CD4-positive, alpha-beta memory T cell (primary cell): ENCODE measurements at regions of chr3 and their contacts with region 1.

Region 1: DNA sequence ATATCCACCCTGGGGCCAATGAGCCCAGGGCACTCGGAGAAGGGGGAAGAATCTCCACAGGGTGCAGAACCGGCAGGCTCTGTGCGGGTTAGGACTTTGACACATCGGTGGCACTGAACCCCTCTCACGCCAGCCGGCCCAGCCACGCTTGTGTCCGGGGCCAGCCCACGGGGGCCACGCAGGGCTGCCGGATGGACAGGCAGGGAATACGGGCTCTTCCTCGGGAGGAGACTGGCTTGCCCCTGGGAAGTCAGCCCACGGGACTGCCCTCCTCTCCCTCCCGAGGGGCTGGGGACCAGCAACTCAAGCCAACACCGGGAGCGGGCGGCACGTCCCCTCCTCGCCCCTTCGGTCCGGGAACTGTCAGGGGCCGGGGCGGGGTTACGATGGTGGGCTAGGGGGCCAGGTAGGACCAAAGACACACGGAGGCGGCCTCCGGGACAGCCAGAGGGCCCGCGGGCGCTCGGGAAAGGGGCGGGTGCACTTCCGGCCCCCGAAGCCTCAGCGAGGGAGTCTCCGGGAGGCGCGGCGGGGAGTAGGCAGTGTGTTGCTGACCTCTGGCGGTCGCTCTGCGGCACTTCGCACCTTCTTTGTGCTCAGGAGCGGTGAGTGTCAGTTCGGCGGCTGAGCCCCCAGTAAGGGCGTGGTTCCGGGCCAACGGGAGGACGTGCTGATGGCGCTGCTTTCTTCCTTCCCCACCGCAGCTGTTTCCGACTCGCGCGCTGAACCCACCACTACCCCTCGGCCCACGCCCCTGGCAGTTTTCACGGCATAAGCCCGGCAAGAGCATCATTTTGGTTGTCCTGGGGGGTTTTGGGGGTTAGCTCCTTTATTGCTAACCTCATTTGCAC is 5.1 kb upstream of the CYP8B1 start:
- DNase-seq: peak; percentile 83 to 86 (median 85)
- H3K4me3 ChIP-seq: peak overlapping the region in 1 of 2 donors; percentile 74
- H3K4me3 Mint-ChIP-seq: peak overlapping the region; percentile 77 to 89 (median 82)
- H3K27ac ChIP-seq: peak overlapping the region; percentile 56
- H3K27ac Mint-ChIP-seq: peak overlapping the region; percentile 26 to 87 (median 71)
- H3K4me1 ChIP-seq: peaks cover 11% of the 10 kb centered on the region
- H3K4me1 Mint-ChIP-seq: peaks cover 9 to 15% (median 12%) of the 10 kb centered on the region in 4 donors
- H3K27me3 ChIP-seq: no peaks in the 10 kb centered on the region
- H3K27me3 Mint-ChIP-seq: peaks cover 1 to 3% of the 10 kb centered on the region in 2 donors

Region 2: GRCh38 chr3:42214565-42215283 is 666.1 kb before region 1 on chr3:
- CTCF ChIA-PET with region 1: no interaction called
- POLR2A ChIA-PET with region 1: no interaction called
- intact Hi-C with region 1: no loop called
- DNase-seq: no peak
- H3K4me3 ChIP-seq: no peak overlapping the region
- H3K4me3 Mint-ChIP-seq: peak overlapping the region in 2 of 8 donors; percentile 20 to 31
- H3K27ac ChIP-seq: no peak overlapping the region
- H3K27ac Mint-ChIP-seq: peak overlapping the region; percentile 6 to 91 (median 51)
- H3K4me1 ChIP-seq: peaks cover 52% of the 10 kb centered on the region
- H3K4me1 Mint-ChIP-seq: peaks cover 39 to 55% (median 49%) of the 10 kb centered on the region in 4 donors
- H3K27me3 ChIP-seq: no peaks in the 10 kb centered on the region
- H3K27me3 Mint-ChIP-seq: no peaks in the 10 kb centered on the region

Region 3: DNA sequence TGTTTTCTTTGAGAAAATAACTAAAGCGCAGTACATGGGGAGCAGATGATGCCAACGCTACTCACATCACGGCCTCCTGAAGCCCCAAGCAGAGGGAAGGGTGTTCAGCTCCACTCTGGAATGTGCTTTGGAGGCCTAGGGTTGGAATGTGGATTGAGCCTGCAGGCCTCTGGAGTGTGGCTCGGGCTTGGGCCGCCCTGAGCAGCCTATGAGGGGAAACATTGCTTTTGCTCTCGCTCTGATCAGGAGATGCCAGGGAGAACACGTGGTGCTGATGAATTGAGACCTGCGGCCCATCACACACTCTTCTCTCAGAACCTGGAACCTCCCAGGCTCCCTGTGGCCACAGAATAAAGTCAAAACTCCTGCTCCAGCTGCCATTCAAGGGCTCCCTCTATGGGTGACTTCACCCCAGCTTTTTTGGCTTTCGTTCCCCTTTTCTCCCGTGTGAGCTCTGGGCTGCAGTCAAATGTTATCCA is 131.0 kb before region 1 on chr3:
- CTCF ChIA-PET with region 1: interaction called, 8 read pairs
- POLR2A ChIA-PET with region 1: no interaction called
- intact Hi-C with region 1: loop called (anchors 1 kb)
- DNase-seq: no peak
- H3K4me3 ChIP-seq: no peak overlapping the region
- H3K4me3 Mint-ChIP-seq: no peak overlapping the region
- H3K27ac ChIP-seq: no peak overlapping the region
- H3K27ac Mint-ChIP-seq: peak overlapping the region in 2 of 7 donors; percentile 53 to 65
- H3K4me1 ChIP-seq: peaks cover 24% of the 10 kb centered on the region
- H3K4me1 Mint-ChIP-seq: peaks cover 20 to 42% (median 31%) of the 10 kb centered on the region in 4 donors
- H3K27me3 ChIP-seq: no peaks in the 10 kb centered on the region
- H3K27me3 Mint-ChIP-seq: no peaks in the 10 kb centered on the region

Region 4: DNA sequence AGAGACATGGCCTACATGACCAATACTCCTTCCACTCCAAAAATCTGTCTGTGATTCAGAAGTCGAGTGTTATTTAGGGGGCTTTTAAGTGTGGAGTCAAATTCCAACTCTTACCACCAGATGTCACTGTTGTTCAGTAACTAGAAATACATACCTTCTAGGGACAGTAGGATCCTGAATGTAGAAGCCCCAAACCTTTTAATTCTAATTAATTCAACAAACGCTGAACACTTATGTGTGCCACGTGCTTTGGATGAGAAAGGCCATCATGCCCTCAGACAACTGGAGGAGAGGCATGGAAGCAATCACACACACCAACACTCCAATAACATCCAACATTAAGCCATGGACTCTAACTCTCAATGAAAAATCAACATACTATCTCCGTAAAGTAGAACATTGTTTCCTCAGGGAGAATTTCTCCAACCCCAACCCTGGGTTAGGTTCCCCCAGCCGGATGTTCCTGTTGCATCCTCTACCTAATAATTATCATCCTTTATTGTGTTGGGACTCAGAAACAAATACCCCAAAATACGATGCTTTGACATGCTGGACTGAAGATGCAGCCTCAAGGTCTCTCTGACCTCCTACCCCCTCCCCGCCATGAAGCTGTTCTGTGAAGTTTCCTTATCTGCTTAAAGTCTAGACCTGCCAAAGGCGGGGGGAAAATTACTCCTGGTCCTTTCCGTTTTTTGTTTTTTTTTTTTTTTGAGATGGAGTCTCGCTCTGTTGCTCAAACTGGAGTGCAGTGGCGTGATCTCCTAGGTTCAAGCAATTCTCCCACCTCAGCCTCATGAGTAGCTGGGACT is 99.7 kb before region 1 on chr3:
- CTCF ChIA-PET with region 1: interaction called, 156 read pairs
- POLR2A ChIA-PET with region 1: interaction called, 4 read pairs
- intact Hi-C with region 1: loop called (anchors 1 kb)
- DNase-seq: peak in 4 of 5 donors; percentile 59 to 64 (median 61)
- H3K4me3 ChIP-seq: no peak overlapping the region
- H3K4me3 Mint-ChIP-seq: no peak overlapping the region
- H3K27ac ChIP-seq: no peak overlapping the region
- H3K27ac Mint-ChIP-seq: peak overlapping the region in 1 of 7 donors; percentile 43
- H3K4me1 ChIP-seq: no peaks in the 10 kb centered on the region
- H3K4me1 Mint-ChIP-seq: peaks cover 0 to 3% (median 2%) of the 10 kb centered on the region in 4 donors
- H3K27me3 ChIP-seq: no peaks in the 10 kb centered on the region
- H3K27me3 Mint-ChIP-seq: no peaks in the 10 kb centered on the region

Region 5: DNA sequence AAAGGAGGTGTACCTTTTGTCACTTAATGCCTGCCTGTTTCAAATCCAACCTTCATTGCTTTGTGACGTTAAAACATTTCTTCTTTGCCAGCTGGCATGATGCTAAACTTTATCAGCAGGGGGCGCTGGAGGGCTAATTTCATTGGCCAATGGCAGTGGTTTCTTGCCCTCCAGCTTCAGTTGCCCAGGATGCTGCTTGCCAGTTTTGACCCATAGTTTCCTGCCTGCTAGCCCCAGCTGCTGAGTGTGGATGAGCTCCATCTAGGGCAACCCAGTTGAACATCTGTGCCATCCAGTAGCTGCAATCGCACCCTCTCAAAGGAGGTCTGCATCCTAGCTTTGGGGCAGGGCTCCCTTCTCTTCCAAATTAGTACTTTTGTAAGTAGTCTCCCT is 49.5 kb before region 1 on chr3:
- CTCF ChIA-PET with region 1: interaction called, 16 read pairs
- POLR2A ChIA-PET with region 1: interaction called, 4 read pairs
- intact Hi-C with region 1: loop called (anchors 1 kb)
- DNase-seq: peak; percentile 64 to 70 (median 65)
- H3K4me3 ChIP-seq: no peak overlapping the region
- H3K4me3 Mint-ChIP-seq: no peak overlapping the region
- H3K27ac ChIP-seq: no peak overlapping the region
- H3K27ac Mint-ChIP-seq: no peak overlapping the region
- H3K4me1 ChIP-seq: no peaks in the 10 kb centered on the region
- H3K4me1 Mint-ChIP-seq: peaks cover 0 to 6% (median 2%) of the 10 kb centered on the region in 4 donors
- H3K27me3 ChIP-seq: no peaks in the 10 kb centered on the region
- H3K27me3 Mint-ChIP-seq: peaks cover 13 to 26% of the 10 kb centered on the region in 2 donors

Region 6: GRCh38 chr3:42868841-42869240 is 12.0 kb before region 1 on chr3:
- CTCF ChIA-PET with region 1: interaction called, 10 read pairs
- POLR2A ChIA-PET with region 1: no interaction called
- intact Hi-C with region 1: no loop called
- DNase-seq: no peak
- H3K4me3 ChIP-seq: no peak overlapping the region
- H3K4me3 Mint-ChIP-seq: no peak overlapping the region
- H3K27ac ChIP-seq: no peak overlapping the region
- H3K27ac Mint-ChIP-seq: no peak overlapping the region
- H3K4me1 ChIP-seq: no peaks in the 10 kb centered on the region
- H3K4me1 Mint-ChIP-seq: no peaks in the 10 kb centered on the region
- H3K27me3 ChIP-seq: no peaks in the 10 kb centered on the region
- H3K27me3 Mint-ChIP-seq: peaks cover 2 to 7% of the 10 kb centered on the region in 2 donors